Ascending aorta (tissue), 2 donors: ENCODE measurements at regions of chr22 and their contacts with region 1.

Region 1: DNA sequence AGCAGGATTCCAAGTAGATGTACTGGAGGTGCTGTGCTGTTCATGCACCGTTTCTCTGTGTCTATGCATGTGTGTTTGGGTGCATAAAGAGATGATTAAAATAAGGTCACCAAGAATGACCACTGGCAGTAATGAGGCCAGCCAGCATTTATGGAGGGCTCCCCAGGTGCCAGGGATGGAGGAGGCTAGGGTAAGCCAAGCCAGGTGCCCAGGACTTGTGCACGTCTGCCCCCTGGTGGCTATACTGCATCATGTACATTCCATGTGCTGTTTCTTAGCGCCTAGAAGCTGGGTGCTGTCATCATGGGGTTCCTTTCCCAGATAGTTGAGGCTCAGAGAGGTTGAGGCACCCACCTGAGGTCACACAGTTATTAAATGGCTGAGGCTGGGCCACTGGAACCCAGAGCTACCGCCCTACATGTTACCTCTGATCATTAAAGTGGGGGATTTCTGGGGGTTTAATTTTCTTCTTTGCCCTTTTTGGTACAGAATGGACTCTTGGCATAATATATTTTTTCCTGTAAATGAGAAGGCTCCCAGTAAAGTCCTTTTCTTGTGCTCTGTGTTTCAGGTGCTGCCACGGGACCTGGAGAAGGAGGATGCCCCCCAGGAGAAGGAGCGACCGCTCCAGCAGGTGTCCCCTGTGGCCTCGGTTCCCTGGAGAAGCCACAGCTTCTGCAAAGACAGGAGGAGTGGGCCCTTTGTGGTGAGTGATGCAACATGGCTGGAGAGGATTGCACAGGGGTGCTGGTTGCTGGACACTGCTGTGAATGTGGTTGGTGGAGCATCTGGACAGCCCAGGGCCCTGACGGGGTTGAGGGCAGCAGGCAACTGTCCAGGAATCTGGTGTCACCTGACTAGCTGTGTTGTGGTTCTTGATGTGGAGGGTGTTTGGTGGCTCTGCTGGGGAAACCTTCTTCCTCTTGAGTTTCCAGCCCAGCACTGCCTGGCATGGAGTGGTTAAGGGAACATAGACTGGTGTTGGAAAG is 96.4 kb downstream of the KIAA1671 start:
- DNase-seq: peak in 1 of 2 donors; percentile 75
- H3K4me3 ChIP-seq: no peak overlapping the region
- H3K27ac ChIP-seq: no peak overlapping the region
- H3K4me1 ChIP-seq: no peaks in the 10 kb centered on the region
- H3K27me3 ChIP-seq: no peaks in the 10 kb centered on the region
- CTCF ChIP-seq: peak; percentile 82 to 89 (median 85)

Region 2: DNA sequence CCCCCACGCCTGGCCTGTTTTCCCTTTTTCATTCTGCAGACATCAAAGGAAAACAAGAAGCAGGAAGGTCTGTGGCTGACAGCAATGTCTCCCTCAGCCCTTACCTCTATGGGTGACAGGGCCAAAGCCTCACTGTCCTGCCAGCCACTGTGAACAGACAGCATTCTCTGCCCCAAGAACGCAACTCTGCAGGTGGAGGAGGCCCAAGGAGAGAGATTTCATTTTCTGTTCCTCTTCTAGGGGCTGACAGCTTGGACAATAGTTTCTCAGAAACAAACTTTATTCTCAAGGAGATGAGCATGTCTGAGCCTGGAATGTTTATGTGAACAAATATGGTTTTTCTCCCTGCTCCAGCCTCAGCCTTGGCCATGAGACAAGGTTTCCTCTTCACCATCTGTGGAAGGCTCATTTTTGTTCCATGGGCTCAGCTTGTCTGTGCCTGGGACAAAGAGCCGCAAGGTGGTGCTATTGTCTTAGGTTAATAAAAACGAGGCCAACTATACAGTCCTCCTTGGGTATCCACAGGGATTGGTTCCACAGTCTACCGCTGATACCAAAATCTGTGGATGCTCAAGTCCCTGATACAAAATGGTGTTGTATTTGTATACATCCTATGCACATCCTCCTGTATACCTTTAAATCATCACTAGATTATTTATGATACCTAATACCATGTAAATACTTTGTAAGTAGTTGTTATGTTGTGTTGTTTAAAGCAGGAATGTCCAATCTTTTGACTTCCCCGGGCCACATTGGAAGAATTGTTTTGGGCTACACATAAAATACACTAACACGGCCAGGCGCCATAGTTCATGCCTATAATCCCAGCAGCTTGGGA is 280.2 kb before region 1 on chr22:
- intact Hi-C with region 1: loop called (anchors 5 kb)
- DNase-seq: peak in 1 of 2 donors; percentile 78
- H3K4me3 ChIP-seq: no peak overlapping the region
- H3K27ac ChIP-seq: no peak overlapping the region
- H3K4me1 ChIP-seq: no peaks in the 10 kb centered on the region
- H3K27me3 ChIP-seq: no peaks in the 10 kb centered on the region
- CTCF ChIP-seq: peak; percentile 43 to 60 (median 53)

Region 3: GRCh38 chr22:24938741-24939341 is 110.1 kb before region 1 on chr22:
- intact Hi-C with region 1: loop called (anchors 5 kb)
- DNase-seq: no peak
- H3K4me3 ChIP-seq: no peak overlapping the region
- H3K27ac ChIP-seq: no peak overlapping the region
- H3K4me1 ChIP-seq: no peaks in the 10 kb centered on the region
- H3K27me3 ChIP-seq: no peaks in the 10 kb centered on the region
- CTCF ChIP-seq: peak; percentile 51 to 74 (median 61)

Region 4: GRCh38 chr22:24951942-24952836 is 96.8 kb before region 1 on chr22 and contains the start of gene KIAA1671:
- intact Hi-C with region 1: loop called (anchors 1 kb)
- DNase-seq: peak in 1 of 2 donors; percentile 88
- H3K4me3 ChIP-seq: peak within 1 kb of the TSS; percentile 82 to 94
- H3K27ac ChIP-seq: peak within 1 kb of the TSS; percentile 39 to 51
- H3K4me1 ChIP-seq: no peaks in the 10 kb centered on the region
- H3K27me3 ChIP-seq: no peaks in the 10 kb centered on the region
- CTCF ChIP-seq: peak; percentile 98 to 100 (median 99)
- total RNA-seq, gene KIAA1671: 79.0 TPM